H1 (cell line): ENCODE measurements at regions of chr17 and their contacts with region 1.

Region 1: DNA sequence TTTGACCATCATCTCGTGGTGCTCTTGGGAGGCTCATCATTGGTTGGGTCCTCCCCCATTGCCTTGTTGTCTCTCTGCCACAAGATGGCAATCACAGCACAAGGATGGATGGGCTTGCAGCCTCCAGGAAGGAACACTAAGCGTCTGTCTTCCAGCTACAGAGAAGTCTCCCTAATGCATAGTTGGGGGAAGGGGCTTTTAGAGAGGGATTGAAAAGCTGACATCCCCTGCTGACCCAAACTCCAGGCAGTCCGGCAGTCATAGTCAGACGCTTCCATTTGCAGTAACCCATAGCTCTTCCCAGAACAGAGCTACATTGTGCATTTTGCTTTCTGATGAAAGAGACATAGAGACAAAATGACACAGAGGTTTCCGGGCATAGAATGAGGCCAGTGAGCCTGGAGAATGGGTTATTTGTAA is 111.4 kb downstream of the UTP18 start:
- DNase-seq: peak; percentile 58 to 67
- H3K4me3 ChIP-seq: peak overlapping the region in 1 of 4 experiments; percentile 35; a peak in 1 of 8 replicates
- H3K27ac ChIP-seq: no peak overlapping the region
- H3K4me1 ChIP-seq: peaks cover 7 to 21% (median 10%) of the 10 kb centered on the region in 4 experiments; a peak in 6 of 7 replicates
- H3K27me3 ChIP-seq: no peaks in the 10 kb centered on the region
- CTCF ChIP-seq: peak; percentile 89 to 94 (median 94)
- EP300 ChIP-seq: no peak
- POLR2A ChIP-seq: no peak
- RAD21 ChIP-seq: peak; percentile 99

Region 2: GRCh38 chr17:51260125-51260880 is 111.4 kb before region 1 on chr17 and contains the start of gene UTP18:
- CTCF ChIA-PET with region 1: no interaction called
- POLR2A ChIA-PET with region 1: no interaction called
- DNase-seq: peak; percentile 90 to 94
- H3K4me3 ChIP-seq: peak within 1 kb of the TSS; percentile 83 to 96 (median 92)
- H3K27ac ChIP-seq: peak within 1 kb of the TSS; percentile 98
- H3K4me1 ChIP-seq: peaks cover 1 to 6% (median 3%) of the 10 kb centered on the region in 4 experiments; a peak in 3 of 7 replicates
- H3K27me3 ChIP-seq: no peaks in the 10 kb centered on the region
- CTCF ChIP-seq: no peak
- EP300 ChIP-seq: peak in 1 of 2 experiments; percentile 98; a peak in 2 of 3 replicates
- POLR2A ChIP-seq: no peak; a peak in 1 of 3 replicates
- RAD21 ChIP-seq: no peak
- total RNA-seq, gene UTP18: 79.6 and 85.7 TPM in 2 replicates

Region 3: GRCh38 chr17:51298508-51299371 is 73.0 kb before region 1 on chr17:
- CTCF ChIA-PET with region 1: interaction called, 22 read pairs
- POLR2A ChIA-PET with region 1: no interaction called
- DNase-seq: no peak
- H3K4me3 ChIP-seq: no peak overlapping the region
- H3K27ac ChIP-seq: no peak overlapping the region
- H3K4me1 ChIP-seq: peaks cover 0 to 11% (median 3%) of the 10 kb centered on the region in 4 experiments; a peak in 2 of 7 replicates
- H3K27me3 ChIP-seq: no peaks in the 10 kb centered on the region
- CTCF ChIP-seq: peak in 2 of 3 experiments; percentile 68 to 83; a peak in 3 of 4 replicates
- EP300 ChIP-seq: no peak
- POLR2A ChIP-seq: 0 out of 3 replicates have a peak, but pooled peaks of 1 of the 2 experiments have one; percentile 8
- RAD21 ChIP-seq: peak; percentile 80 to 87

Region 4: DNA sequence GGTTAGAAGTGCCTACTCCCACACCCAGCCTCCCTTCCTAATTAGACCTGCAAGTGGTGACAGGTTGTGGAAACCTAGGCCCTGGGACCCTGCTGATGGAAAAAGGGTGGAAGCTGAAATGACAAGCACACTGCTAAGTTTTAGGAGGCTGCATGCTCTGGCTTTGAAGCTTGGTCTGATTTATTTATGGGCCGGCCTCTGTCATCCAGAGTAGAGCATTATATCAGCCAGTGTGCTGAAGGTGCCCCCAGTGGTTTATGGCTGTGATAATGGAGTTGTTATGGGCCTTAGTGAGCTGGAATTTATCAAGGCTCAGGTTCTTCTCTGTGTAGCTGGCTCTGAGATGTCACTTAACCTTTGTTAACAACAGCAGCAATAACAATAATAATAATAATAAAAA is 31.2 kb after region 1 on chr17:
- CTCF ChIA-PET with region 1: interaction called, 10 read pairs
- POLR2A ChIA-PET with region 1: interaction called, 3 read pairs
- DNase-seq: no peak
- H3K4me3 ChIP-seq: no peak overlapping the region
- H3K27ac ChIP-seq: no peak overlapping the region
- H3K4me1 ChIP-seq: peaks cover 0 to 5% (median 2%) of the 10 kb centered on the region in 4 experiments; a peak in 1 of 7 replicates
- H3K27me3 ChIP-seq: no peaks in the 10 kb centered on the region
- CTCF ChIP-seq: no peak
- EP300 ChIP-seq: no peak
- POLR2A ChIP-seq: no peak
- RAD21 ChIP-seq: no peak

Region 5: DNA sequence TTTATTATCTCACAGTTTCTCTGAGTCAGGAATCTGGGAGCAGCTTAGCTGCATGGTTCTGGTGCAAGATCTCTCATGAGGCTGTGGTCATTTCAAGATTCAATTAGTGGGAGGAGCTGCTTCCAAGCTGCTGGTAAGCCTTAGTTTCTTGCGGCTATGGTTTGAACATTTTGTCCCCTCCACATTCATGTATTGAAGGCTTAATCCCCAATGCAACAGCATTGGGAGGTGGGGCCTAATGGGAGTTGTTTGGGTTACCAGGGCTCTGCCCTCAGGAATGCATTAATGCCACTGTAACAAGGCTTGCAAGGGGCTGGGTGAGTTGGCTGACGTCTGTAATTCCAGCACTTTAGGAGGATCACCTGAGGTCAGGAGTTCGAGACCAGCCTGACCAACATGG is 161.5 kb after region 1 on chr17:
- CTCF ChIA-PET with region 1: interaction called, 20 read pairs
- POLR2A ChIA-PET with region 1: no interaction called
- DNase-seq: no peak
- H3K4me3 ChIP-seq: no peak overlapping the region
- H3K27ac ChIP-seq: no peak overlapping the region
- H3K4me1 ChIP-seq: peaks cover 0 to 4% (median 0%) of the 10 kb centered on the region in 4 experiments; a peak in 1 of 7 replicates
- H3K27me3 ChIP-seq: no peaks in the 10 kb centered on the region
- CTCF ChIP-seq: no peak
- EP300 ChIP-seq: no peak
- POLR2A ChIP-seq: no peak
- RAD21 ChIP-seq: no peak

Region 6: GRCh38 chr17:51540151-51540550 is 168.4 kb after region 1 on chr17:
- CTCF ChIA-PET with region 1: interaction called, 20 read pairs
- POLR2A ChIA-PET with region 1: no interaction called
- DNase-seq: no peak
- H3K4me3 ChIP-seq: no peak overlapping the region
- H3K27ac ChIP-seq: no peak overlapping the region
- H3K4me1 ChIP-seq: peaks cover 0 to 4% (median 0%) of the 10 kb centered on the region in 4 experiments; a peak in 1 of 7 replicates
- H3K27me3 ChIP-seq: no peaks in the 10 kb centered on the region
- CTCF ChIP-seq: peak in 1 of 3 experiments; percentile 15; a peak in 1 of 4 replicates
- EP300 ChIP-seq: no peak
- POLR2A ChIP-seq: no peak
- RAD21 ChIP-seq: peak; percentile 39 to 50

Region 7: GRCh38 chr17:51585514-51586104 is 213.9 kb after region 1 on chr17:
- CTCF ChIA-PET with region 1: interaction called, 13 read pairs
- POLR2A ChIA-PET with region 1: no interaction called
- DNase-seq: peak; percentile 9 to 62
- H3K4me3 ChIP-seq: no peak overlapping the region
- H3K27ac ChIP-seq: no peak overlapping the region
- H3K4me1 ChIP-seq: no peaks in the 10 kb centered on the region
- H3K27me3 ChIP-seq: no peaks in the 10 kb centered on the region
- CTCF ChIP-seq: peak; percentile 76 to 91 (median 89)
- EP300 ChIP-seq: no peak
- POLR2A ChIP-seq: no peak
- RAD21 ChIP-seq: peak; percentile 89 to 94

Region 8: DNA sequence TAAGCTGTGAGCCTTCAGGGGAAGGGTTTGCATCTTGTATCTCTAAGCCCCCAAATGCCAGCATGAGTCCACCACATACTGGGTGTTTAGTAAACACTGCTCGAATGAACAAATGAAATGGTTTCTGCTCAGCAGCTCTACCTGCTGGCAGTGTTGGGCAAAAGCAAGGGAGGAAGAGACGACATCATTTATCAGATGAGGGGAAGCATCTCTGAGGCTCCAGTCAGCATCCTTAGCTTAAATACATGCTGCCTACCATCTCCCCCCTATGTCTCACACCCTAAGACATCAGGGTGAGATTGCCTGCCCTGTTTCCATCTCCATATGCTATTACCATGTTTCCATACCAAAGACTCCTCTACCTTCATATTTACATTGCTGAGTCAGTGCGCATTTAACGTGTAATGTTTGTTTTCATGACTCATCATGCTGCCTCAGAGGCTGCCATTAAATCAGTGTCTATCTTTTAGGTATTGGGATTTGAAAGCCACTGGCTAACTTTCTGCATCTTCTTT is 268.4 kb after region 1 on chr17:
- CTCF ChIA-PET with region 1: interaction called, 20 read pairs
- POLR2A ChIA-PET with region 1: no interaction called
- DNase-seq: peak in 1 of 2 experiments; percentile 65
- H3K4me3 ChIP-seq: no peak overlapping the region
- H3K27ac ChIP-seq: no peak overlapping the region
- H3K4me1 ChIP-seq: peaks cover 0 to 3% (median 1%) of the 10 kb centered on the region in 4 experiments; a peak in 2 of 7 replicates
- H3K27me3 ChIP-seq: no peaks in the 10 kb centered on the region
- CTCF ChIP-seq: peak; percentile 36 to 85 (median 75)
- EP300 ChIP-seq: no peak
- POLR2A ChIP-seq: no peak
- RAD21 ChIP-seq: peak; percentile 63 to 73